Prostate gland (tissue), 2 donors: ENCODE measurements at regions of chr4 and their contacts with region 1.

Region 1: GRCh38 chr4:44927399-44928380 is 201.3 kb upstream of the GNPDA2 start:
- DNase-seq: no peak
- H3K4me3 ChIP-seq: no peak overlapping the region
- H3K27ac ChIP-seq: no peak overlapping the region
- H3K4me1 ChIP-seq: no peaks in the 10 kb centered on the region
- H3K27me3 ChIP-seq: no peaks in the 10 kb centered on the region
- CTCF ChIP-seq: peak in 3 of 4 experiments; percentile 34 to 55 (median 48)
- POLR2A ChIP-seq: no peak

Region 2: DNA sequence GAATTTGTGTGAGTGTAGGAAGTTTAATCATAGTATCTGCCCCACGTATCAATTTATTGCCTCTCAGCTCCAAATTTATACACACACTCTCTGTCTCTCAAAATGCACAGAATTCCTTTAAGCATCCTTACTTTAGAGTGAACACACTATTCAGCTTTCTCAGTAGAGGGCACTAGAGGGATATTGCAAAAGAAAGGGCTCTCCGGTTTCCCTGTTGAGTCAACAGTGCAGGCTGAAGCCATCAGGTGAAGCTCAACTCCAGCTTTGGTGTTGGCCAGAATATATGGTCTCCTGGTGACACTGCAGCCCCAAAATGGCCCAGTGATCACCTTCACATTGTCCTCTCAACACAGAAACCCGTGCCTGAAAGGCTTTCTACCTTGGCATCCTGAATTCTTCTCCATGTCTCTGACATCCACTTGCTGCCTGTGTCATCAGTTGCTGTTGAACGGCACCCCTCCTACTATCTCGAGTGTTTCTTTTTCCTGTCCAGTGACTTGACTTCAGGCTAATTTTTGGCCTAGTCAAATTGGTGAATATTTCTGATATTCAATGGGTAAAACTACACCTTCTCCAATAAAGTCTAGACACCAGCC is 525.7 kb after region 1 on chr4:
- intact Hi-C with region 1: no loop called
- DNase-seq: no peak
- H3K4me3 ChIP-seq: no peak overlapping the region
- H3K27ac ChIP-seq: no peak overlapping the region
- H3K4me1 ChIP-seq: no peaks in the 10 kb centered on the region
- H3K27me3 ChIP-seq: no peaks in the 10 kb centered on the region
- CTCF ChIP-seq: peak in 2 of 4 experiments; percentile 10 to 14
- POLR2A ChIP-seq: no peak

Region 3: DNA sequence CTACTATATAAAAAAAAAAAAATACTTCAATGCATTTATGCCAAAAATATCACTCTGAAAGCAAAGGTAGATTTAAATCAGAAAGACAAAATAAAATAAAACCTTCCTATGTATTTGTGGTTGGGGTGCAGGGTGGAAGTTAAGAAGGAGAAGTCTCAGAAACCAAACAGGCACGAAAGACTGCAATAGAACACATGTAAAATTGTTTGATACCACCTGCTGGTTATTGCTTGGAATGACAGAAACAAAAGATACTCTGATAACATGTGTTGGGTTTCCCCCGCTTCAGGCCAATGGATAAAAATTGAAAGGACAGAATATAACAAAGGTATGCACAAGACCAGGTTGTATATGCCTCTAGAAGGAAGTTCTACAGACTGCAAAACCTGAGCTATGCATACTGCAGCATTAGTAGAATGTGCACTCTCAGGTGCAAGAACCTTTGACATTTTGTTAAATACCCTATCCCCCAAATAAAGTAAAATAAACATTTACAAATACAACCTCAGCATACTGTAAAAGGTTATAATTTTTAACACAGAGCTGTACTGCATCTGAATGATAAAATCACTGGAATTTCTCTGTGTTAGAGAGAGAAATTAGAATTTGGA is 1343.4 kb after region 1 on chr4:
- intact Hi-C with region 1: loop called (anchors 10 kb)
- DNase-seq: no peak
- H3K4me3 ChIP-seq: no peak overlapping the region
- H3K27ac ChIP-seq: no peak overlapping the region
- H3K4me1 ChIP-seq: no peaks in the 10 kb centered on the region
- H3K27me3 ChIP-seq: no peaks in the 10 kb centered on the region
- CTCF ChIP-seq: peak in 3 of 4 experiments; percentile 11 to 17 (median 16)
- POLR2A ChIP-seq: no peak